GM12878 (cell line): ENCODE measurements at regions of chr17 and their contacts with region 1.

Region 1: GRCh38 chr17:27654654-27655524 is 23.9 kb downstream of the LGALS9 start:
- DNase-seq: peak; percentile 25
- ATAC-seq: peak; percentile 98
- H3K4me3 ChIP-seq: no peak overlapping the region
- H3K27ac ChIP-seq: no peak overlapping the region
- H3K4me1 ChIP-seq: no peaks in the 10 kb centered on the region
- H3K27me3 ChIP-seq: no peaks in the 10 kb centered on the region
- CTCF ChIP-seq: peak; percentile 67 to 90 (median 81)
- EP300 ChIP-seq: no peak
- POLR2A ChIP-seq: no peak
- RAD21 ChIP-seq: peak; percentile 57

Region 2: GRCh38 chr17:27353461-27354050 is 301.3 kb before region 1 on chr17:
- CTCF ChIA-PET with region 1: interaction called, 23 read pairs
- POLR2A ChIA-PET with region 1: no interaction called
- RAD21 ChIA-PET with region 1: interaction called, 8 read pairs
- SMC1A ChIA-PET with region 1: interaction called, 3 read pairs
- in situ Hi-C with region 1: no loop called
- intact Hi-C with region 1: loop called (anchors 5 kb)
- DNase-seq: peak; percentile 42
- ATAC-seq: peak; percentile 94
- H3K4me3 ChIP-seq: peak overlapping the region; percentile 73
- H3K27ac ChIP-seq: peak overlapping the region; percentile 70
- H3K4me1 ChIP-seq: peaks cover 7% of the 10 kb centered on the region
- H3K27me3 ChIP-seq: no peaks in the 10 kb centered on the region
- CTCF ChIP-seq: peak; percentile 63 to 93 (median 89); a peak in 4 of 6 replicates
- EP300 ChIP-seq: peak in 1 of 2 experiments; percentile 39; a peak in 2 of 4 replicates
- POLR2A ChIP-seq: peak; percentile 85
- RAD21 ChIP-seq: peak; percentile 73

Region 3: GRCh38 chr17:27609611-27610303 is 45.1 kb before region 1 on chr17:
- CTCF ChIA-PET with region 1: interaction called, 134 read pairs
- POLR2A ChIA-PET with region 1: no interaction called
- RAD21 ChIA-PET with region 1: interaction called, 5 read pairs
- SMC1A ChIA-PET with region 1: interaction called, 16 read pairs
- in situ Hi-C with region 1: loop called (anchors 10 kb)
- intact Hi-C with region 1: no loop called
- DNase-seq: no peak
- ATAC-seq: peak; percentile 37; the same call in 2 of the 3 replicates
- H3K4me3 ChIP-seq: no peak overlapping the region
- H3K27ac ChIP-seq: no peak overlapping the region
- H3K4me1 ChIP-seq: no peaks in the 10 kb centered on the region
- H3K27me3 ChIP-seq: no peaks in the 10 kb centered on the region
- CTCF ChIP-seq: peak; percentile 43 to 52 (median 47)
- EP300 ChIP-seq: no peak
- POLR2A ChIP-seq: no peak
- RAD21 ChIP-seq: peak; percentile 70

Region 4: GRCh38 chr17:27616414-27616813 is 38.5 kb before region 1 on chr17:
- CTCF ChIA-PET with region 1: interaction called, 9 read pairs
- POLR2A ChIA-PET with region 1: no interaction called
- RAD21 ChIA-PET with region 1: no interaction called
- SMC1A ChIA-PET with region 1: interaction called, 16 read pairs
- in situ Hi-C with region 1: no loop called
- intact Hi-C with region 1: no loop called
- DNase-seq: no peak
- ATAC-seq: no peak
- H3K4me3 ChIP-seq: no peak overlapping the region
- H3K27ac ChIP-seq: peak overlapping the region; percentile 48
- H3K4me1 ChIP-seq: peaks cover 5% of the 10 kb centered on the region; the same call in 1 of the 2 replicates
- H3K27me3 ChIP-seq: no peaks in the 10 kb centered on the region
- CTCF ChIP-seq: no peak
- EP300 ChIP-seq: no peak
- POLR2A ChIP-seq: no peak
- RAD21 ChIP-seq: no peak

Region 5: DNA sequence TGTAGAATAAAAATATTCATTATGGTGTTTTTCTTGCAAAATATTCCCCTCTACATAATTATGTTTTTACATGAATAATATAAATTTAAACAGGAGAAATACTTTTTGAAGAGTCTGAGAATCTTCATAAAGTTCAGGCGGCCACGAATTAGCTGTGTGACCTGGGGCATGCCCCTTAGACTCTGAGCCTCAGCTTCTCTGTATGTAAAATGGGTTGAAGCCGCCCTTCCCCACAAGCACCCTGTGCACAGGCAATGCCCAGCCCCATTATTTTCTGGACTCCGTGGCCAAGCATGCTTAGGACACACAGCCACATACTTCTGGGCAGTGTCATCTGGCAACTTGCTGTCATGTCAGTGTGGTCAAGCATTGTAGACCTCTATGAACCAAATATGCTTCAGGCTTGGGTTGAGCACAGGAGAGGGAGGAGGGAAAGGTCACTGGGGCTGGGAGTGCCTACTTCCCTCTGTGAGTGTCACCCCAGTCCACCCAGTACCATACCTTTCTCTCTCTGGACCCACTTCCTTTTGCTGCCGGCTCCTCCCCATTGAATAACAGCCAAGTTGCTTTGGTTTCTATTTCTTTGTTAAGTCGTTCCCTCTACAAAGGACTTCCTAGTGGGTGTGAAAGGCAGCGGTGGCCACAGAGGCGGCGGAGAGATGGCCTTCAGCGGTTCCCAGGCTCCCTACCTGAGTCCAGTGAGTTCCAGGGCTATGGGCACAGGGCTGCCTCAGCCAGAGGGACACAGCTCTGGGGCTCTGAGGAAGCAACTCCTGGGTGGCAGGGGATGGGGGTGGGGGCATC is 24.1 kb before region 1 on chr17 and contains the start of gene LGALS9:
- CTCF ChIA-PET with region 1: interaction called, 23 read pairs
- POLR2A ChIA-PET with region 1: no interaction called
- RAD21 ChIA-PET with region 1: interaction called, 4 read pairs
- SMC1A ChIA-PET with region 1: interaction called, 3 read pairs
- in situ Hi-C with region 1: no loop called
- intact Hi-C with region 1: no loop called
- DNase-seq: peak; percentile 53
- ATAC-seq: peak; percentile 83
- H3K4me3 ChIP-seq: peak within 1 kb of the TSS; percentile 78
- H3K27ac ChIP-seq: peak within 1 kb of the TSS; percentile 89
- H3K4me1 ChIP-seq: peaks cover 11% of the 10 kb centered on the region
- H3K27me3 ChIP-seq: no peaks in the 10 kb centered on the region
- CTCF ChIP-seq: no peak
- EP300 ChIP-seq: no peak
- POLR2A ChIP-seq: peak; percentile 79
- RAD21 ChIP-seq: no peak
- polyA plus RNA-seq, gene LGALS9: 22.5 to 30.2 TPM

Region 6: DNA sequence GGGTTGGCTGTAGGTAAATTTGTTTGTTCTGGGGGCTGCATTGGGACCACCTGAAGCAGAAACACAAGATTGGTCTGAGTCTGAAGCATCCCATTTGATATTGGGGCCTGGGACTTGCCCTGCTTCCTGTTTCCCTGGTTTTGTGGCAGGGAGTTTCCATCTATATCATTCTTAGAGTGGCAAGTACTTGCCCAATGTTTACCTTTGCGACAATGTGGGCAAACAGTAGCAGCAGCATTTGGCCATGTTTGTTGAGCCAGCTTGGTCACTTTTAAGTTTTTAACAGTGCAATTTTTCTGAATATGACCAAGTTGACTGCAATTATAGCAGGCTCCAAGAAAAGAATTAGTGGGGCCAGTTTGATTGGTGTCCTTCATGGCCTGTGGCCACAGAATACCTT is 37.9 kb after region 1 on chr17:
- CTCF ChIA-PET with region 1: no interaction called
- POLR2A ChIA-PET with region 1: no interaction called
- RAD21 ChIA-PET with region 1: no interaction called
- SMC1A ChIA-PET with region 1: interaction called, 3 read pairs
- in situ Hi-C with region 1: loop called (anchors 5 kb)
- intact Hi-C with region 1: no loop called
- DNase-seq: no peak
- ATAC-seq: no peak
- H3K4me3 ChIP-seq: no peak overlapping the region
- H3K27ac ChIP-seq: no peak overlapping the region
- H3K4me1 ChIP-seq: no peaks in the 10 kb centered on the region
- H3K27me3 ChIP-seq: no peaks in the 10 kb centered on the region
- CTCF ChIP-seq: no peak
- EP300 ChIP-seq: no peak
- POLR2A ChIP-seq: no peak
- RAD21 ChIP-seq: no peak

Region 7: DNA sequence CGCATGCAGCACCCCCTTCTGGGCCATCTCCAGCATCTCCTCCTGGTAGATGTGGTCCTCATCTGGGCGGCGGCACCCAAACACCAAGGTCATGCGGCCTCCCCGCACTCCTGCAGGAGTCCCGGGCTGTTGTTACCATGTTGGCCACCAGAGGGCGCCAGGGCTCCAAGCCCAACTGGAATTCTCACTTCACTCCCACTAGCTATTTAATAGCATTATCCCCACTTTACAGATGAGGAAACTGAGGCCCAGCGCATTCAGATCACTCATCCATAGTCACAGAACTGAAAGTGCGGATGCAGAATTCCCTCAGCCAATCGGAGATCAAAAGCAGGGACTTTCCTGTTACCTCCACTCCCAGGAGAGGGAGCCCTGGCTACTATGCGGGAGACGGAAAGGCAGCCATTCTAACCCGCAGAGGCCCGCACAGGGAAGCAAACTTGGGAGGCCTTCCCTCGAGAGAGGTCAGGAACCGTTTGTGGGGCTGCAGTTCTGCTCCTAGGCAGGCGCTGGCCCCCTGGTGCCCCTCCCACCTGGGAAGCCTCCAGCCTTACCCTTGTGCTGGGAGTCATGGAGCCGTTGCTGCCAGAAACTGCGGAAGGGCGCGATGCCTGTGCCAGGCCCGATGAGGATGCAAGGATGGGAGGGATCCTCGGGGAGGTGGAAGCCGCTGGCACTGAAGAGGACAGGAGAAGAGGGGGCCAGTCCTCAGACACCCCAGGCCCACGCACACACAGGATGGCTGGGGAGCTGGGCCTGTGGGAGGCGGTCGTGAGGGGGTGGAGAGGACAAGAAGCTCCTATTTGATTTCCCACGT is 105.4 kb after region 1 on chr17:
- CTCF ChIA-PET with region 1: interaction called, 32 read pairs
- POLR2A ChIA-PET with region 1: no interaction called
- RAD21 ChIA-PET with region 1: interaction called, 31 read pairs
- SMC1A ChIA-PET with region 1: interaction called, 22 read pairs
- in situ Hi-C with region 1: no loop called
- intact Hi-C with region 1: loop called (anchors 1 kb)
- DNase-seq: no peak
- ATAC-seq: peak; percentile 84
- H3K4me3 ChIP-seq: no peak overlapping the region
- H3K27ac ChIP-seq: no peak overlapping the region
- H3K4me1 ChIP-seq: no peaks in the 10 kb centered on the region
- H3K27me3 ChIP-seq: no peaks in the 10 kb centered on the region
- CTCF ChIP-seq: peak; percentile 76 to 91 (median 78)
- EP300 ChIP-seq: no peak
- POLR2A ChIP-seq: no peak
- RAD21 ChIP-seq: peak; percentile 62

Region 8: DNA sequence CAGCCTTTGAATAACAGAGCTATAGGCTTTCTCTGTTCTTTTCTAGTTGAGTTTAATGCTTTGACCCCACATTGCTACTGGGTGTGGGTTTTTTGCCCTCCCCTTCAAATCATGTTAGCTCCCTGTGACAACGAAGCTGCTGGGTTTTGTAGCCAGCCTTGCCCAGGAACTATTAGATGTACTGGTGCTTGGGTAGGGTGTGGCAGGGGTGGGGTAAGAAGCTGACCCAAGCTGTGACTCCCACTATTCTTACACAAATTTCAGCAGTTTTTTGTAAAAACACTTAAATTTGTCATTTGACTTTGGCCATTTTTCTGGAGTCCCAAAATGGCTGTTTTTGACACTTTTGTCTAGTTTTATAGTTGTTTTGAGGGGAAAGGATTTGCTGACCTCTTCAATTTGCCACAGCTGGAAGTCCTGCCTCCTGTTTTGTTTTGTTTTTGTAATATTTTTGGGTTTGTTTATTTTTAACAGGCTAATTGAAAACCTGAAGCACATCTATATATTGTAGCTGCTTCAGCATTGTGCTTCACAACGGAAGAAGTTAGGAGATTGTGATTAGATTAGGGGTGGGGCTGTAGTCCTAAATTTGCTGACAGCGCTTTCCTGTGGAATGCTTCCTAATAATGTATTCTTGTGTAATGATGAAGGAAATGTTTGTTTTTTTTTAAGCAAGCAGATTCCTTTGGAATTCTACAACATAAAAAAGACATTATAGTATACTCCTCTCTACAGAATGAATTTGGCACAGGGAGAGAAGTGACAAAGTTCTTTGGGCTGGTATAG is 457.5 kb after region 1 on chr17:
- CTCF ChIA-PET with region 1: no interaction called
- POLR2A ChIA-PET with region 1: no interaction called
- RAD21 ChIA-PET with region 1: no interaction called
- SMC1A ChIA-PET with region 1: no interaction called
- in situ Hi-C with region 1: no loop called
- intact Hi-C with region 1: no loop called
- DNase-seq: no peak
- ATAC-seq: no peak
- H3K4me3 ChIP-seq: no peak overlapping the region
- H3K27ac ChIP-seq: no peak overlapping the region
- H3K4me1 ChIP-seq: peaks cover 6% of the 10 kb centered on the region
- H3K27me3 ChIP-seq: no peaks in the 10 kb centered on the region
- CTCF ChIP-seq: no peak
- EP300 ChIP-seq: no peak
- POLR2A ChIP-seq: no peak
- RAD21 ChIP-seq: no peak